Adrenal gland (tissue), 19 donors: ENCODE measurements at regions of chr2 and their contacts with region 1.

Region 1: DNA sequence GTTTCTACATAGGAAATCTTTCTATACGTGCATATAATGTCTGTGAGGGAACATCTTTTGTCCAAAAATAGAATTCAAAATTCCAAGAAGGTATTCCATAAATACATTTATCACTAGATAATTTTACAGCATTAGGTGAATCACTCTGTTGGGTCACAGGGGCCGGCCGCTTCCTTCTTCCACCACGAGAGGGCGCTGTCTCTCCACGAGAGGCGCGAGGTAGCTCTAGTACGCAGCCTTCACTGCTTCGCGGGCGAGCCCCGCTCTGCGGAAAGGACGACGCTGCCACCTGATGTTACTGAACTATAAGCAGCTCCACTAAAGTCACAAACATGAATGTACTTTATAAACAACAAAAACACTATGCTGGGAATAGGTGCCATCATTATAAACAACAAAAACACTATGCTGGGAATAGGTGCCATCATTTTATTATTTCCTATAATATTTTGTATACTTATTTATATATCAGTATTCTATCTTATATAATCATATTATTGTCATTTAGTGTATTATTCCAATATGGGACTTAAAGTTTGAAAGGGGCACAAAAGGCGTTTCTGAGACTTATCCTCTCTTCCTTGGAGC is 69.4 kb upstream of the REV1 start:
- DNase-seq: peak; percentile 75 to 96 (median 88)
- H3K4me3 ChIP-seq: no peak overlapping the region
- H3K27ac ChIP-seq: no peak overlapping the region
- H3K4me1 ChIP-seq: no peaks in the 10 kb centered on the region
- H3K27me3 ChIP-seq: no peaks in the 10 kb centered on the region
- CTCF ChIP-seq: peak; percentile 97 to 100 (median 98)
- POLR2A ChIP-seq: no peak

Region 2: DNA sequence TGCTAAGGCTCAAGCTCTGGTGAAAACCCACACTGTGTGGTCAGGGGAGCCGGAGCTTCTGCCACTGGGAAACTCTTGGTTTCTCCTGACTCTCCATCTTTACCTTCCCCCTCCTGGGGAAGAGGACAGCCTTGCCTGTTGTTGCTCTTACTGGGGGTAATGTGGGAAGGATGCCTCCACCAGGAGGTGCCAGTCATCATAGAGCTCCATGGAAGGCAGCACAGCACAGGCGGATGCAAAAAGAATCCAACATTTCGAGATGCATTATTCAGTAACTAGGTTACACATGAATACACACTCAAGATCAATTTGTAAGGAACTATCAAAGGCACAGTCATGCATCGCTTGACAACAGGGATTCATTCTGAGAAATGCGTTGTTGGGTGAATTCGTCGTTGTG is 260.6 kb after region 1 on chr2:
- intact Hi-C with region 1: loop called (anchors 10 kb)
- DNase-seq: no peak
- H3K4me3 ChIP-seq: no peak overlapping the region
- H3K27ac ChIP-seq: no peak overlapping the region
- H3K4me1 ChIP-seq: no peaks in the 10 kb centered on the region
- H3K27me3 ChIP-seq: peaks cover 3% of the 10 kb centered on the region
- CTCF ChIP-seq: no peak
- POLR2A ChIP-seq: no peak

Region 3: DNA sequence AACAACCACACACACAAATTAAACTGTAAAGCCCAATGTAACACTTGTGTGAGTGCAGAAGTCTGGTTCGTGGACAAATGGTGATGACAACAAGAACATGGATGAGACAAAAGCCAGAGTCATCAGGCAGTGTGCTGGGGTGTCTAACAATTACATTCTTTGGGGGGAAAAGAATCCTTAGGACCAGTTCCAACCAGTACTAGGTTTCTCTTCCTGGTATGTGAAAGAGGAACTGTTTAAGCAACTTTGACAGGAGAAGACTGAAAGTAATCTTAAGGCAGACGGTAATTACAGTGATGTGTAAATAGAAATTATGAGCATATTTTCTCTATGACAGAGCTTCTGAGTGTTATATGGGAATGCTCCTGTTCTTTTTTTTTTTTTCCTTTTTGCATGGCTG is 449.8 kb after region 1 on chr2:
- intact Hi-C with region 1: loop called in 1 of 2 experiments (anchors 10 kb)
- DNase-seq: no peak
- H3K4me3 ChIP-seq: no peak overlapping the region
- H3K27ac ChIP-seq: no peak overlapping the region
- H3K4me1 ChIP-seq: peaks cover 0 to 9% of the 10 kb centered on the region in 2 donors
- H3K27me3 ChIP-seq: no peaks in the 10 kb centered on the region
- CTCF ChIP-seq: no peak
- POLR2A ChIP-seq: no peak

Region 4: DNA sequence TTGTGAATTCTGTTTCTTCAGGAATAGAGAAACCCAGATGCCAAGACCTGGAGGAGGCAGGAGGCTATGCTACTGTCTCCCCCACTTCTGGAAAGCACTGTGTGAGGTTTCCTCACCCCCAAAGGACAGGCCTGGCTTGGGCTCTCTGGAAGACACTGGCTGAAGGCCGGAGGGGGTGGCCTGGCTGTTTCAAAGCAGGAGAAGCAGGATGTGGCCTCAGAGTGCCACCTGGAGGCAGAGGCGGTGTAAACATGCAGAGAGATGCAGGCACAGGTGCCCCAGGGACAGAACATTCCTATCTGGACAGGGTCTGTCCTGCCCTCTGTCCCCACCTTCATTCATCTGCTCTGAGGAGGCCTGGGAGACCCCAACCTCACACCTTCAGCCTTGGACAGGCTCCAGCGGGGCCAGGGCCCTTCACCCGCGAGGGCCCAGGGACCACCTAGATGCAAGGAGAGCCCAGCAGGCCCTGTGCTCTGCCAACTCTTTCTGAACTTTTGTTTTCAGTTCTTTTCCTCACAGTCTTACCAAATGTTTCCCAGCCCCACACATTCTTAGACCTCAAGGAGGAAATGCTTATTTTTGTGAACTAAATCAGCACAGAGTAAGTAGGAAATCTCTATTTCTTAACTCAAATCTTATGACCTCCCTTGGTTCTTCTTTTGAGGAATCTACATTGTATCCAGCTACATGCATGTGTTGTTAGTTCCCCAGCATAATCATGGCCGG is 683.9 kb after region 1 on chr2:
- intact Hi-C with region 1: loop called in 1 of 2 experiments (anchors 10 kb)
- DNase-seq: peak in 6 of 7 donors; percentile 41 to 82 (median 58)
- H3K4me3 ChIP-seq: no peak overlapping the region
- H3K27ac ChIP-seq: peak overlapping the region in 1 of 5 donors; percentile 17
- H3K4me1 ChIP-seq: no peaks in the 10 kb centered on the region
- H3K27me3 ChIP-seq: no peaks in the 10 kb centered on the region
- CTCF ChIP-seq: peak; percentile 12 to 66 (median 47)
- POLR2A ChIP-seq: no peak

Region 5: GRCh38 chr2:100262555-100263320 is 703.6 kb after region 1 on chr2:
- intact Hi-C with region 1: loop called (anchors 2 to 5 kb)
- DNase-seq: peak; percentile 67 to 93 (median 77)
- H3K4me3 ChIP-seq: no peak overlapping the region
- H3K27ac ChIP-seq: peak overlapping the region in 1 of 5 donors; percentile 22
- H3K4me1 ChIP-seq: peaks cover 0 to 10% of the 10 kb centered on the region in 2 donors
- H3K27me3 ChIP-seq: no peaks in the 10 kb centered on the region
- CTCF ChIP-seq: peak; percentile 93 to 99 (median 96)
- POLR2A ChIP-seq: peak in 1 of 2 donors; percentile 9

Region 6: GRCh38 chr2:100394111-100394641 is 835.0 kb after region 1 on chr2:
- intact Hi-C with region 1: loop called in 1 of 2 experiments (anchors 10 kb)
- DNase-seq: peak in 1 of 7 donors; percentile 44
- H3K4me3 ChIP-seq: no peak overlapping the region
- H3K27ac ChIP-seq: no peak overlapping the region
- H3K4me1 ChIP-seq: no peaks in the 10 kb centered on the region
- H3K27me3 ChIP-seq: no peaks in the 10 kb centered on the region
- CTCF ChIP-seq: no peak
- POLR2A ChIP-seq: no peak

Region 7: DNA sequence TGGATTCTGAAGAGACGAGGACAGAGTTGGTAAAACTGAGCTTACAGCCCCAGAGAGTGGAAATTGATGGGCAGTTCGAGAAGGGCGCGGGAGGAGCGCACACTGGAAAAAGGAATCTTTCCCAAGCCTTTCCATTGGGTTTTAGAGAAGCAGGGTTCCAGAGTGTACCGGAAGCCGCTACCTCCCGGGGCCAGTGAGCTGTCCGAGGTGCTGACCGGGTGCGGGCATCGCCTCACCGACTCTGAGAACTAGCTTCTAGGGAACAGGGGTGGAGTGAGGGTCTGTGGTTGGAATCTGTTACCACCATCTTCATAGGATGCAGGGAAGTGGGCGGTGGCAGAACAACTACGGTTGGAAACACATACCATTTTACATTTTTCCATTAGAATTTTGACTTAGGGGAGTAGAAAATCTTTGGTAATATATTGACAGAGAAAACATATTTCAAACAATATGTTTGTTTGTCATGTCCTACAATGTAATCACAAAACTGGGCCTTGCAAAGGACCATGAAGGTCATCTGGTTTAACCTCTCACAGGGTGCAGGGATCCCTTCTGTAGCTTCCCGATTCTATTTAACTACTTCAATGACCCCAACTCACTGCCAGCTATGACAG is 911.8 kb after region 1 on chr2:
- intact Hi-C with region 1: no loop called
- DNase-seq: peak in 6 of 7 donors; percentile 15 to 43 (median 24)
- H3K4me3 ChIP-seq: no peak overlapping the region
- H3K27ac ChIP-seq: no peak overlapping the region
- H3K4me1 ChIP-seq: no peaks in the 10 kb centered on the region
- H3K27me3 ChIP-seq: peaks cover 11% of the 10 kb centered on the region
- CTCF ChIP-seq: no peak
- POLR2A ChIP-seq: no peak